GM12878 (cell line): ENCODE measurements at regions of chr17 and their contacts with region 1.

Region 1: DNA sequence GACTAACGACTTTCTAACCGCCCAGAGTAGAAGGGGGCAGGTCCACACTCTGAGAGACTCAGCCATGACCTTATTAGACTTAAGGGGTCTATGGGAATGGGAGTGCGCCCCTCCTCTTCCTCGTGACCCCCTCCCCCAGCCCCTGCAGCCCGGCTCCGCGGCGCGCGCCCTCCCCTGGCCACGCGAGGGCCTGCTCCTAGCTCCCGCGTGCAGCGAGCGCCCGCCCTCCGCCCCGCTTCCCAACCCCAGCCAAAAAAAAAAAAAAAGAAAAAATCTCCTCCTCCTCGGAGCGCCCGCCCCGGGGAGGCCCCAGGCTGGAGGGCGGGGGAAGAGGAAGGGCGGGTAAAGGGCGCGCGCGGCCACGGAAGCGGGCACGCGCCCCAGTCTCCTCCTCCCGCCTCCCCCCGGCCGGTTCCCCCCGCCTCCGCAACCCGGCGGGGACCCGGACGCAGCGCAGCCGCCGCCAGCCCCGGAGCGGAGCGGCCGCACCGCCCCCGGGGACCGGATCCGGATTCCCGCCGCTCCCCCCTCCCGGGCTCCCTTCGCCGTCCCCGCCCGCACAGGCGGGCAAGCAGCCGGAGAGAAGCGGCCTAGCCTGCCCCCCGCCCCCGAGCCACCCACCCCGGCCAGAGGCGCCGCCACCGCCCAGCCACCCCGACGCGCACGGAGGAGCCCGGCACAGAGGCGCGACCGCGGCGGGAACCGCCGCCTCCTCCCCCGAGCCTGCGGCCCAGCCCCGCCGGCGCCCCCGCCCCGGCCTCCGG is 949 bp downstream of the UBTF start:
- DNase-seq: no peak
- ATAC-seq: peak; percentile 45
- H3K4me3 ChIP-seq: peak overlapping the region; percentile 82
- H3K27ac ChIP-seq: peak overlapping the region; percentile 91
- H3K4me1 ChIP-seq: peaks cover 20% of the 10 kb centered on the region
- H3K27me3 ChIP-seq: no peaks in the 10 kb centered on the region
- CTCF ChIP-seq: peak; percentile 45 to 66 (median 52); a peak in 5 of 6 replicates
- EP300 ChIP-seq: no peak
- POLR2A ChIP-seq: no peak; the same call in 1 of the 2 replicates
- RAD21 ChIP-seq: peak; percentile 25; the same call in 1 of the 2 replicates

Region 2: GRCh38 chr17:44247440-44247841 is 28.9 kb after region 1 on chr17:
- CTCF ChIA-PET with region 1: interaction called, 11 read pairs
- POLR2A ChIA-PET with region 1: interaction called, 26 read pairs
- RAD21 ChIA-PET with region 1: interaction called, 16 read pairs
- SMC1A ChIA-PET with region 1: interaction called, 8 read pairs
- in situ Hi-C with region 1: no loop called
- intact Hi-C with region 1: loop called (anchors 2 kb)
- DNase-seq: no peak
- ATAC-seq: no peak
- H3K4me3 ChIP-seq: no peak overlapping the region
- H3K27ac ChIP-seq: no peak overlapping the region
- H3K4me1 ChIP-seq: peaks cover 36% of the 10 kb centered on the region
- H3K27me3 ChIP-seq: no peaks in the 10 kb centered on the region
- CTCF ChIP-seq: no peak
- EP300 ChIP-seq: no peak
- POLR2A ChIP-seq: no peak
- RAD21 ChIP-seq: no peak

Region 3: GRCh38 chr17:44324571-44325275 is 106.2 kb after region 1 on chr17 and contains the start of gene SLC25A39:
- CTCF ChIA-PET with region 1: interaction called, 28 read pairs
- POLR2A ChIA-PET with region 1: interaction called, 10 read pairs
- RAD21 ChIA-PET with region 1: interaction called, 14 read pairs
- SMC1A ChIA-PET with region 1: interaction called, 8 read pairs
- in situ Hi-C with region 1: no loop called
- intact Hi-C with region 1: no loop called
- DNase-seq: no peak
- ATAC-seq: peak; percentile 80
- H3K4me3 ChIP-seq: peak within 1 kb of the TSS; percentile 97
- H3K27ac ChIP-seq: peak within 1 kb of the TSS; percentile 96
- H3K4me1 ChIP-seq: peaks cover 8% of the 10 kb centered on the region
- H3K27me3 ChIP-seq: no peaks in the 10 kb centered on the region
- CTCF ChIP-seq: no peak
- EP300 ChIP-seq: no peak
- POLR2A ChIP-seq: peak; percentile 88
- RAD21 ChIP-seq: no peak
- polyA plus RNA-seq, gene SLC25A39: 3.5 to 7.5 TPM

Region 4: GRCh38 chr17:44331249-44331760 is 112.8 kb after region 1 on chr17:
- CTCF ChIA-PET with region 1: interaction called, 28 read pairs
- POLR2A ChIA-PET with region 1: interaction called, 6 read pairs
- RAD21 ChIA-PET with region 1: interaction called, 14 read pairs
- SMC1A ChIA-PET with region 1: interaction called, 10 read pairs
- in situ Hi-C with region 1: no loop called
- intact Hi-C with region 1: no loop called
- DNase-seq: no peak
- ATAC-seq: peak; percentile 72
- H3K4me3 ChIP-seq: no peak overlapping the region
- H3K27ac ChIP-seq: no peak overlapping the region
- H3K4me1 ChIP-seq: peaks cover 14% of the 10 kb centered on the region
- H3K27me3 ChIP-seq: no peaks in the 10 kb centered on the region
- CTCF ChIP-seq: peak; percentile 69 to 85 (median 84)
- EP300 ChIP-seq: no peak
- POLR2A ChIP-seq: no peak
- RAD21 ChIP-seq: peak; percentile 83

Region 5: DNA sequence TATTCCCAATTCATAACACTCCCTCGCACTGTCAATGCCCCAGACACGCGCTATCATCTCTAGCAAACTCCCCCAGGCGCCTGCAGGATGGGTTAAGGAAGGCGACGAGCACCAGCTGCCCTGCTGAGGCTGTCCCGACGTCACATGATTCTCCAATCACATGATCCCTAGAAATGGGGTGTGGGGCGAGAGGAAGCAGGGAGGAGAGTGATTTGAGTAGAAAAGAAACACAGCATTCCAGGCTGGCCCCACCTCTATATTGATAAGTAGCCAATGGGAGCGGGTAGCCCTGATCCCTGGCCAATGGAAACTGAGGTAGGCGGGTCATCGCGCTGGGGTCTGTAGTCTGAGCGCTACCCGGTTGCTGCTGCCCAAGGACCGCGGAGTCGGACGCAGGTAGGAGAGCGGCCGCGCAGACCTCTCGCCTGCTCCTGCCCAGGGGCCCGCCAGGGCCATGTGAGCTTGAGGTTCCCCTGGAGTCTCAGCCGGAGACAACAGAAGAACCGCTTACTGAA is 126.5 kb after region 1 on chr17 and contains the start of gene GRN:
- CTCF ChIA-PET with region 1: interaction called, 40 read pairs
- POLR2A ChIA-PET with region 1: interaction called, 7 read pairs
- RAD21 ChIA-PET with region 1: interaction called, 10 read pairs
- SMC1A ChIA-PET with region 1: interaction called, 14 read pairs
- in situ Hi-C with region 1: no loop called
- intact Hi-C with region 1: loop called (anchors 2 kb)
- DNase-seq: peak; percentile 92
- ATAC-seq: peak; percentile 84
- H3K4me3 ChIP-seq: peak within 1 kb of the TSS; percentile 87
- H3K27ac ChIP-seq: peak within 1 kb of the TSS; percentile 92
- H3K4me1 ChIP-seq: peaks cover 37% of the 10 kb centered on the region
- H3K27me3 ChIP-seq: no peaks in the 10 kb centered on the region
- CTCF ChIP-seq: no peak
- EP300 ChIP-seq: no peak
- POLR2A ChIP-seq: peak; percentile 92
- RAD21 ChIP-seq: no peak
- polyA plus RNA-seq, gene GRN: 22.3 to 33.2 TPM

Region 6: DNA sequence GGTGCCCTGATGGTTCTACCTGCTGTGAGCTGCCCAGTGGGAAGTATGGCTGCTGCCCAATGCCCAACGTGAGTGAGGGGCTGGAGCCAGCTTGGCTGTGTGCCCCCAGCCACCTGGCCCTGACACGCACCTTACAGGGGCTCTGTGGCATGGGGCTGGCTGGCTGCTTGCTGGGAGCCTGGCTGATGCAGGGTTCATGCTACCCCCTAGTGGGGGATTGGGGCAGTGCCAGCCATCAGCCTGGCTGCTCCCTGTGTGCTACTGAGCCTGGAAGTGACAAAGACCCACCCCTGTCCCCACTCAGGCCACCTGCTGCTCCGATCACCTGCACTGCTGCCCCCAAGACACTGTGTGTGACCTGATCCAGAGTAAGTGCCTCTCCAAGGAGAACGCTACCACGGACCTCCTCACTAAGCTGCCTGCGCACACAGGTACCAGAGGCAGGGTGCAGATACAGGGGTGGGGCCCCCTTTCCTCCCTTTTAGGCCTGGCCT is 132.3 kb after region 1 on chr17:
- CTCF ChIA-PET with region 1: interaction called, 40 read pairs
- POLR2A ChIA-PET with region 1: interaction called, 7 read pairs
- RAD21 ChIA-PET with region 1: interaction called, 10 read pairs
- SMC1A ChIA-PET with region 1: interaction called, 14 read pairs
- in situ Hi-C with region 1: no loop called
- intact Hi-C with region 1: loop called (anchors 2 kb)
- DNase-seq: peak; percentile 27
- ATAC-seq: peak; percentile 53
- H3K4me3 ChIP-seq: no peak overlapping the region
- H3K27ac ChIP-seq: no peak overlapping the region
- H3K4me1 ChIP-seq: peaks cover 40% of the 10 kb centered on the region
- H3K27me3 ChIP-seq: no peaks in the 10 kb centered on the region; a peak in 1 of 4 replicates
- CTCF ChIP-seq: peak; percentile 87 to 97 (median 88)
- EP300 ChIP-seq: no peak
- POLR2A ChIP-seq: no peak; the same call in 1 of the 2 replicates
- RAD21 ChIP-seq: peak; percentile 72

Region 7: GRCh38 chr17:44503147-44504029 is 284.9 kb after region 1 on chr17 and contains the start of gene GPATCH8:
- CTCF ChIA-PET with region 1: no interaction called
- POLR2A ChIA-PET with region 1: interaction called, 3 read pairs
- RAD21 ChIA-PET with region 1: no interaction called
- SMC1A ChIA-PET with region 1: interaction called, 4 read pairs
- in situ Hi-C with region 1: loop called (anchors 25 kb)
- intact Hi-C with region 1: loop called (anchors 10 kb)
- DNase-seq: peak; percentile 91
- ATAC-seq: peak; percentile 96
- H3K4me3 ChIP-seq: peak within 1 kb of the TSS; percentile 99
- H3K27ac ChIP-seq: peak within 1 kb of the TSS; percentile 91
- H3K4me1 ChIP-seq: peaks cover 5% of the 10 kb centered on the region
- H3K27me3 ChIP-seq: no peaks in the 10 kb centered on the region
- CTCF ChIP-seq: no peak
- EP300 ChIP-seq: no peak
- POLR2A ChIP-seq: peak; percentile 86
- RAD21 ChIP-seq: no peak
- polyA plus RNA-seq, gene GPATCH8: 11.7 to 18.2 TPM